Mammary epithelial cell (primary cell): ENCODE measurements at regions of chr11 and their contacts with region 1.

Region 1: DNA sequence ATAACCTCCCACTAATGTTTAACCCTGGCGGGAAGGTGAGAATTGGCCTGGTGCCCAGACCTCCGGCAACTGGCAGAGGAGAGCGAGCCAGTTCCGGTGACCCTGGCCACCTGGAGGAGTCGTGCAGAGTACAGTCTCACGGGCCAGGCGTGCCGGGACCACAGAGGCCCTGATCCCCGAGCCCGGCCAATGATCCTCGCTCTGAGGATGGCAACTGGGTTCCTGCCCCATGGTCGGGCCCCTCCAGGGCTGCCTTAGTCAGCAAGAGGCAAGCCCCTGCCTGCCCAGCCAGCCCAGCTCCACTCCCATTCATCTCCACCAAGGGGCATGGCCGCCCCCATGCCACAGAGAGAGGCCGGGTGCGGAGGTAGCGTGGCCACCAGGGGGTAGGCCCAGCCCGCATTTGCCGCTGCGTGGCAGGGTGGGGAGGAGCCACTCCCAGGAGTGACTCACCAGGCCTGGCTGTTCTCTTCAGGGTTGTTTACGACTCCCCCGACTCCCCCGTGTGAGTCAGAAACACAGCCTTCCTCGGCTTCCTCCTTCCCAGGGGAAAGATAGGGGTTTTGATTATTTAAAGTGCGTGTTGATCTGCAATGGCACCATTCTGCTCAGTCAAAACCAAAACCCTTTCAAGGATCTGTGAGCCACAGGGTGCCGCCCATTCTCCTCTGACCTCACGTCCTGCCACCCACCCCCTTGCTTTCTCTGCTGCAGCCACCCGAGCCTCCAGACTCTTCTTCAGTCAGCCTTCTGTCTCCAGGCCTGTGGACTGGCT is at the start of gene SLC25A45:
- DNase-seq: peak; percentile 100
- H3K4me3 ChIP-seq: peak within 1 kb of the TSS; percentile 17 to 31 (median 22)
- H3K27ac ChIP-seq: peak within 1 kb of the TSS; percentile 94
- H3K4me1 ChIP-seq: peaks cover 47% of the 10 kb centered on the region
- H3K27me3 ChIP-seq: no peaks in the 10 kb centered on the region
- CTCF ChIP-seq: peak; percentile 55 to 87
- total RNA-seq, gene SLC25A45: 0.50 to 2.4 TPM

Region 2: DNA sequence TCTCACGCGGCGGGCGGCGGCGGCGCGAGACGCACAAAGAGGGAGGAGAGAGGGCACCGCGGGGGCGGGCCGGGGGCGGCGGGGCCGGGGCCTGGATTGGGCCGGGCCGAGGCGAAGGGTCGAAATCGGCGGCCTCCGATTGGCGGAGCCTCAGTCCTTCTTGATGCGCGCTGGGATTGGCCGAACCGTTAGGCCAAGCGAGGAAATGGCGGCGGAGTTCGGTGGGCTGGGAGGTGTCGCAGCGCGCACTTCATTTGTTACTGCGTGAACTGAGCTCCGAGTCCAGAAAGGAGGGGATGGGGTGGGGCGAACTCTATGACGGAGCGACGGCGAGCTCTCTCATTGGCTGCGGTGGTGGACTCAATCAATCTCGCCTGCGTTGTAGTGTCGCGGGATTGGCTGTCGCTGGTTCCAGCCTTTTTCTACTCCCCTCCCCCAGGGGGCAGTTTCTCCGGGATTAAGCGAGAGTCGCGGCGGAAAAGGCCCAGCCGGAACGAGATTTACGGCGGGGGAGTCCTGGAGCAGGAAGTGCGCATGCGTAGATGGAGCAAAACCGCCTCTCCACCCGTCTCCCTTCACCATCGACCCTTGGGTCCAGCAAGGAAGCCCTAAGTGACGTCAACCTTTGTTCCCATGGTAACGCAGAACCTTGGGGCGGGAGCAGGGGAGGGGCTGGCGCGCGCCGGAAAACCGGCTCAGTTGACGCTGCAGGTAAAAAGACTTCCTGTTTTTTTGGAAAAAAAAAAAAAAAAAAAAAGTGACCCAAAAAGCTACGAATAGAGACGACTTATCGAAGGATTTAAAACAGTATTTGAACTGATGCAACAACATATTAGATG is 603.5 kb before region 1 on chr11 and contains the start of gene SF1:
- CTCF ChIA-PET with region 1: no interaction called
- dilution Hi-C with region 1: no loop called
- in situ Hi-C with region 1: no loop called
- intact Hi-C with region 1: no loop called
- DNase-seq: peak; percentile 100
- H3K4me3 ChIP-seq: peak within 1 kb of the TSS; percentile 84 to 90 (median 86)
- H3K27ac ChIP-seq: peak within 1 kb of the TSS; percentile 96
- H3K4me1 ChIP-seq: peaks cover 22% of the 10 kb centered on the region
- H3K27me3 ChIP-seq: no peaks in the 10 kb centered on the region
- CTCF ChIP-seq: no peak
- total RNA-seq, gene SF1: 115 to 294 TPM

Region 3: DNA sequence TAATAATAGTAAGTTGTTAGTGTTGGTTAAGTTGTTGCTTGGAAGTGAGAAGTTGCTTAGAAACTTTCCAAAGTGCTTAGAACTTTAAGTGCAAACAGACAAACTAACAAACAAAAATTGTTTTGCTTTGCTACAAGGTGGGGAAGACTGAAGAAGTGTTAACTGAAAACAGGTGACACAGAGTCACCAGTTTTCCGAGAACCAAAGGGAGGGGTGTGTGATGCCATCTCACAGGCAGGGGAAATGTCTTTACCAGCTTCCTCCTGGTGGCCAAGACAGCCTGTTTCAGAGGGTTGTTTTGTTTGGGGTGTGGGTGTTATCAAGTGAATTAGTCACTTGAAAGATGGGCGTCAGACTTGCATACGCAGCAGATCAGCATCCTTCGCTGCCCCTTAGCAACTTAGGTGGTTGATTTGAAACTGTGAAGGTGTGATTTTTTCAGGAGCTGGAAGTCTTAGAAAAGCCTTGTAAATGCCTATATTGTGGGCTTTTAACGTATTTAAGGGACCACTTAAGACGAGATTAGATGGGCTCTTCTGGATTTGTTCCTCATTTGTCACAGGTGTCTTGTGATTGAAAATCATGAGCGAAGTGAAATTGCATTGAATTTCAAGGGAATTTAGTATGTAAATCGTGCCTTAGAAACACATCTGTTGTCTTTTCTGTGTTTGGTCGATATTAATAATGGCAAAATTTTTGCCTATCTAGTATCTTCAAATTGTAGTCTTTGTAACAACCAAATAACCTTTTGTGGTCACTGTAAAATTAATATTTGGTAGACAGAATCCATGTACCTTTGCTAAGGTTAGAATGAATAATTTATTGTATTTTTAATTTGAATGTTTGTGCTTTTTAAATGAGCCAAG is 43.1 kb after region 1 on chr11:
- CTCF ChIA-PET with region 1: interaction called, 3 read pairs
- dilution Hi-C with region 1: no loop called
- in situ Hi-C with region 1: no loop called
- intact Hi-C with region 1: loop called (anchors 1 kb)
- DNase-seq: peak; percentile 80
- H3K4me3 ChIP-seq: peak overlapping the region; percentile 63 to 89 (median 87)
- H3K27ac ChIP-seq: peak overlapping the region; percentile 100
- H3K4me1 ChIP-seq: peaks cover 28% of the 10 kb centered on the region
- H3K27me3 ChIP-seq: no peaks in the 10 kb centered on the region
- CTCF ChIP-seq: peak; percentile 6 to 21

Region 4: DNA sequence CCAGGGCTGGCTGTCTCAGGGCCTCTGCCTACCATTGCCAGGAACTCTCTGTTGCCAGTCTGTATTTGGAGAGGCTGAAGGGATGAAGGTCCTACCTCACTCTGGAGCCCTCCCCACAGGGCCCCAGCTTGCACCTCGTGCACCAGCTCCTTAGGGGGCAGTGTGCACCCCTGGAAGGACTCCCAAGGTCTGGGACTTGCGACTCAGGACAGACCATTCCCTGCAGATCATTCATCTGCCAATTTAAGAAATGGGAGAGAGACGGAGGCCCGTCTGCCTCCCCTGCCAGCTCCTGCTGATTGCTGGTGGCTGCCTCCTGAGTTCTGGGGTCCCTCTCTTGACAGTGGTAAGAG is 89.2 kb after region 1 on chr11:
- CTCF ChIA-PET with region 1: no interaction called
- dilution Hi-C with region 1: no loop called
- in situ Hi-C with region 1: no loop called
- intact Hi-C with region 1: loop called (anchors 1 kb)
- DNase-seq: no peak
- H3K4me3 ChIP-seq: no peak overlapping the region
- H3K27ac ChIP-seq: peak overlapping the region; percentile 95
- H3K4me1 ChIP-seq: peaks cover 20% of the 10 kb centered on the region
- H3K27me3 ChIP-seq: no peaks in the 10 kb centered on the region
- CTCF ChIP-seq: peak; percentile 55 to 62

Region 5: GRCh38 chr11:65506770-65507505 is 124.7 kb after region 1 on chr11:
- CTCF ChIA-PET with region 1: interaction called, 3 read pairs
- dilution Hi-C with region 1: no loop called
- in situ Hi-C with region 1: loop called in 1 of 2 experiments (anchors 5 kb)
- intact Hi-C with region 1: loop called (anchors 1 kb)
- DNase-seq: no peak
- H3K4me3 ChIP-seq: peak overlapping the region in 1 of 3 experiments; percentile 6
- H3K27ac ChIP-seq: peak overlapping the region; percentile 81
- H3K4me1 ChIP-seq: peaks cover 17% of the 10 kb centered on the region
- H3K27me3 ChIP-seq: no peaks in the 10 kb centered on the region
- CTCF ChIP-seq: no peak